PC-9 (cell line): ENCODE measurements at regions of chr16 and their contacts with region 1.

Region 1: DNA sequence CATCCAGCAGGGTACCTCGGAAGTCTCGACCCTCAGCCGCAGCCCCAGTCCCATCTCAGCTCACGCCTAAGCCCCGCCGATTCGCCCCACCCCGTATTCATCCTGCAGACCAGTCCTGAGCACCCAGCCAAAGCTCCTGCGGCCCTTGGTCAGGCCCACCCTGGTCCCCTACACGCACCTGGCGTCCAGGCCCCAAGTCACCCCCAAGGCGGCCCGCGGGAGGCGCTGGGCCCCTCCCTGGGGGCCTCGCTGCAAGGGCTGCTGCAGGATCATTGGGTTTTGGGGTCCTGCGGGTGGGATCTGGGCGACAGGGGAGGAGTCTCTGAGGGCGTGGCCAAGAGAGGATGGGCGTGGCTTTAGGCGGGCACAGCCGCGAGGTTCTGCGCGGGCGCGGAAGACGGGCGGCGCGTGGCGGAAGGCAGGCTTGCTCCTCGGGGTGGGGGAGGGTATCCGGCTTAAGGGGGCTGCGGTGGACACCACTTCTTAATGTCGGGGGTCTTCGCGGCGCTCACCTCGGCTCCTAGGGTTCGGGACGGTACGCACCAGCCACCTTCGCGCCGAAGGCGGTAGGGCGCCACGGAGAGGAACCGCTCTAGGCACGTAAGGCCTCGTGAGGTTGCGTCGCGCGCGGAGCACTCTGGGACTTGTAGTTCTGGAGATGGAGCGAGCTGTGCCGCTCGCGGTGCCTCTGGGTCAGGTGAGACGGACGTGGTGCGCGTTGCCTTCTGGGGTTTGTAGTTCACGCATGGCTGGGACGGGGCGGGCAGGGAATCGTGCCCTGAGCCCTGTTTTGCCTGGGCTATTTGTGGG is at the starts of genes HCFC1R1 and THOC6:
- DNase-seq: peak; percentile 93 to 98
- H3K4me3 ChIP-seq: peak within 1 kb of the TSS; percentile 76
- H3K27ac ChIP-seq: peak within 1 kb of the TSS; percentile 97
- H3K4me1 ChIP-seq: peaks cover 13% of the 10 kb centered on the region
- H3K27me3 ChIP-seq: no peaks in the 10 kb centered on the region
- CTCF ChIP-seq: no peak
- total RNA-seq, gene HCFC1R1: 118 and 186 TPM in 2 replicates
- total RNA-seq, gene THOC6: 69.9 and 109 TPM in 2 replicates

Region 2: GRCh38 chr16:2968738-2969544 is 54.9 kb before region 1 on chr16 and contains the start of gene PAQR4:
- CTCF ChIA-PET with region 1: no interaction called
- POLR2A ChIA-PET with region 1: interaction called, 9 read pairs
- intact Hi-C with region 1: loop called (anchors 1 kb)
- DNase-seq: peak; percentile 68 to 95
- H3K4me3 ChIP-seq: peak within 1 kb of the TSS; percentile 77
- H3K27ac ChIP-seq: no peak within 1 kb of the TSS
- H3K4me1 ChIP-seq: peaks cover 5% of the 10 kb centered on the region
- H3K27me3 ChIP-seq: no peaks in the 10 kb centered on the region
- CTCF ChIP-seq: no peak
- total RNA-seq, gene PAQR4: 33.6 and 40.7 TPM in 2 replicates

Region 3: DNA sequence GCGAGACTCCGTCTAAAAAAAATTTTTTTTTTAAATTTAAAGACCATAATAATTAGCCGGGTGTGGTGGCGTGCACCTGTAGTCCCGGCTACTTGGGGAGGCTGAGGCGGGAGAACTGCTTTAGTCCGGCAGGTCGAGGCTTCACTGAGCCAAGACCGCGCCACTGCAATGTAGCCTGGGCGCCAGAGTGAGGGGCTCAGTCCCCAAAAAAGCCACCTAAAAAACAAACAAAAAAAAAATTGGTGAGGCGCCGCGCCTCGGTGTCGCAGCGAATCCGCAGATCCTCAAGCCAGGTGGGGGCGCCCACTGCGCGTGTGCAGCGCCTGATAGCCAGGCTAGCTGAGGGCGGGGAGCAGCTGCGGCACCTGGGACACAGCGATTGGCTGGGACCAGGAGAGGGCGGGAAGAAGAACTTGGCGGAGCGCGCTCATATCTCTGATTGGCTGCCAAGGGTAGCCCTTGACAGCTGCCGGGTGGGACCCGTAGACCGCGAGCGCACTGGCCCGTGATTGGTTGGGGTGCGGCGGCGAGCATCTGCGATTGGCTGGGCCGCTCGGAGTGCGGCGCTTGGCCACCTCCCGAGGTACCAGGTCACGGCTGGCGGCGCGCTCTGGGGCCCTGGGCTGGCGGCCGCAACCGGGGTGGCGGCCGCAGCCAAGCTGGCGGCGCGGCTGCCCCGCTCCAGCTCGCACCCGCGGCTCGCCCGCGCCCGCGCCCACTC is 20.1 kb before region 1 on chr16:
- CTCF ChIA-PET with region 1: interaction called, 15 read pairs
- POLR2A ChIA-PET with region 1: interaction called, 87 read pairs
- intact Hi-C with region 1: loop called (anchors 1 kb)
- DNase-seq: peak; percentile 96 to 100
- H3K4me3 ChIP-seq: no peak overlapping the region; the same call in 1 of the 2 replicates
- H3K27ac ChIP-seq: no peak overlapping the region
- H3K4me1 ChIP-seq: peaks cover 33% of the 10 kb centered on the region
- H3K27me3 ChIP-seq: no peaks in the 10 kb centered on the region
- CTCF ChIP-seq: peak; percentile 61

Region 4: DNA sequence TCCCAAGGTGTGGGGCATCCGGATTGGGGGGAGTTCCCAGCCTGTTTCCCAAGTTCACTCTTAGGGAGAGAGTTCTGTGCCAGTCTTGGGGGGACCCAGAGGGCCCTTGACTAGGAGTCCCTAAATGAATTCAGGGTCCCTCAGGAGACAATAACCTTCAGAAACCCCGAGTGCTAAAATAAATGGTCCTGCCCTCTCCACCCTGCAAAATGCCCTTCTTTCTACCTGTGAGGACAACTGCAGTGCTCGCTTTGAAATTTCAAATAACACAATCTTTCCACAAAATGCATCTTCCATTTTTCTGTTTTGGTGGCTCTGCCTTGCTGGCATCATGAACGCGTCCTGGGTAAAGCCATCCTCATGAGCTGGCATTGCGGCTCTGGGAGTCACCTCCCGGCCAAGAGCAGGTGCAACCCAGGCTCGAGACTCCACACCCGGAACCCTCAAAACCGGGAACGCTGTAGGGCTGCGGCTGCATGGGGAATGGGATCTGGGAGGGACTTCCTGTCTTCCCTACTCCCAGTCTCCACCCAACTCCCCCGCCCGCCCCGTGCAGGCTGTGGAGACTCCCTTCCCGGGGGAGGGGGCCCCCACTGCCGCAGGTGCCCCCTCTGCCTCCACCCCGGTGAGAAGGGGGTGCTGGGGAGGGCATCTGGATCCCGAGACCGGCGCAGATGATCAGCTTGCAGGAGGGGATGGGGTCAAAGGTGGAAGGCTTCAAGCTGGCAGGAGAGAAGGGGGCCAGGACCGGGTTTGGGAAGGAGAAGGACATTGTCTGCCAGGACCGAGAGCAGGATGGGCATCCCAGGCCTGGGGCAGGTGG is 88.4 kb after region 1 on chr16 and contains the start of gene ZNF205:
- CTCF ChIA-PET with region 1: interaction called, 10 read pairs
- POLR2A ChIA-PET with region 1: interaction called, 11 read pairs
- intact Hi-C with region 1: no loop called
- DNase-seq: peak; percentile 79 to 87
- H3K4me3 ChIP-seq: peak within 1 kb of the TSS; percentile 72
- H3K27ac ChIP-seq: no peak within 1 kb of the TSS
- H3K4me1 ChIP-seq: peaks cover 16% of the 10 kb centered on the region
- H3K27me3 ChIP-seq: no peaks in the 10 kb centered on the region
- CTCF ChIP-seq: no peak
- total RNA-seq, gene ZNF205: 17.4 and 18.0 TPM in 2 replicates

Region 5: DNA sequence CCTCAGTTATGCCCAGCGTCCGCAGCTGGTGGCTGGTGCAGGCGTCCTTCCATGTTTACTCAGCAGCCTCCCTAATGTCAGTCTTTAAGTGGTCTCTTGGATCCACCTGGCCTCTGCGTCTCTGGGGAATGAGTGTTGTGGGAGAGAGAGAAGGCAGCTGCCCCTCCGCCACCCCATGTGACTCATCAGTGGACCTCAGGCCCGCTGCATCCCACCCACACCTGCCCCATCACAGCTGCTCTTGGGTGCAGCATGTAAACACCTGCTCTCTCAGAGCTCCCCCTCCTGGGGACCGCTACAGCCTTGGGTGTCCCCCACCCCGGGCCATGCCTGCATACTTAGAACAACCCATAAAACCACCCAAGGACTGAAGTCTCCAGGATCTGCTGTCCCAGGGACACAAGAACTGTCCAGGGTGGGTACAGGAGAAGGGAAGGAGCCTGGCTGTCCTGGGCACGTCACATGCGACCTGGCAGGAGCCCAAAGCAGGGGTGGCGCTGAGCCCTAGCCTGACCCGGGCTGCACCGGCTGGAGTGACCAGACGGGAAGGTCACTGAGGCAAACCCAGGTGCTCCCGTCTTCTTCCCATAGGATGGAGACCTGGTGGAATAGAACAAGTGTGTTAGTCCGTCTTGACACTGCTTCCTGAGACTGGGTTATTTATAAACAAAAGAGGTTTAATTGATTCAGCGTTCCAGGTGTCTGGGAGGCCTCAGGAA is 467.2 kb after region 1 on chr16:
- CTCF ChIA-PET with region 1: no interaction called
- POLR2A ChIA-PET with region 1: interaction called, 10 read pairs
- intact Hi-C with region 1: no loop called
- DNase-seq: no peak
- H3K4me3 ChIP-seq: no peak overlapping the region
- H3K27ac ChIP-seq: no peak overlapping the region
- H3K4me1 ChIP-seq: peaks cover 13% of the 10 kb centered on the region
- H3K27me3 ChIP-seq: no peaks in the 10 kb centered on the region
- CTCF ChIP-seq: no peak

Region 6: GRCh38 chr16:4461250-4462085 is 1437.6 kb after region 1 on chr16:
- CTCF ChIA-PET with region 1: no interaction called
- POLR2A ChIA-PET with region 1: interaction called, 13 read pairs
- intact Hi-C with region 1: no loop called
- DNase-seq: no peak
- H3K4me3 ChIP-seq: no peak overlapping the region
- H3K27ac ChIP-seq: no peak overlapping the region
- H3K4me1 ChIP-seq: peaks cover 30% of the 10 kb centered on the region
- H3K27me3 ChIP-seq: no peaks in the 10 kb centered on the region
- CTCF ChIP-seq: no peak